ENCODE measurements at regions of chr20 and their contacts with region 1.

Region 1: DNA sequence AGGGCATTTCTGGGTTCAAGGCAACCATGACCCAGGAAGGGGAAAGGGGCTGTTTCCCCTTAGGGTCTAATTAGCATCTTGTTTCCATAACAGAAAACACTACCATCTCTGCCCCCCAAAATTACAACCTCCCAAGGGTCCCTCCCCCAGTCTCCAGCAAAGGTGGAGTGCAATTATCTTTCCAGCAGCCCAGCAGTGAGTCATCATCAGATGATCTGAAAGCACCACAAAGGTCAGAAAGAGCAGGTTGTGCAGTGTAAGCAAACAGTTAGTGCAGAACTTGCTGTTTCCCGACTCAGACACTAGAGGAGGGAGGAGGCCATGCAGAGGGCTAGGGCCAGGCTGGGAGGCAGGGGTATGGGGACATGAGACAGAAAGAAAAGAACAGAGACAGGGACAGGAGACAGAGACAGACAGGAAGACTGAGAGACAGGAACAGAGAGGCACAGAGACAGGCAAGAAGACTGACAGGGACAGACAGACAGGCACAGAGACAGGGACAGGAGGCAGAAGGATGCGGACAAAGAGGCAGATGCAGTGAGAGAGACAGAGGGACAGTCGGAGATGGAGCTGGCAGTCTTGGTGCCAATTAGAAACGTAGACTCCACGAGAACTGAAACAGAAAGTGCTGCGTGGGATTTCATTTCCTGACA is 62.5 kb downstream of the PYGB start:
- DNase-seq: peak; percentile 70
- H3K4me3 ChIP-seq: peak overlapping the region; percentile 31
- H3K27me3 ChIP-seq: no peaks in the 10 kb centered on the region
- CTCF ChIP-seq: peak; percentile 88

Region 2: DNA sequence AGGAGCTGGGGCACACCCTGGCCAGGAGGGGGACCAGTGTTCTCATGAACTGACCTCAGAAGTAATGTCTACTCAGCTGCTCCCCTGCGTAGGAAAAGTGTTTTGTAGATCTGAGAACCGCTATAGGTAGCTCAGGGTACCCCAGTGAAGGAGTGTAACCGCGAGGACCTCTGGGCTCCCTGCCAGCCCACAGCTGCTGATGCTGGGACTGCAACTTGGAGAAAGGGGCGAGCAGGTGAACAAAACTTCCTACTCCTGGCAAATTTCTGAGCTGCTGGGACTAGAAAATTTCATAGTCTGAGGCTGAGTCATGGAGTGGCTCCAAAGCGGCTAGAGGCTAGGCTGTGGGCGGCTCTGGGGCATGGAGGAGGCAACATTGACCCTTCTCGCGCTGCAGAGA is 10.6 kb before region 1 on chr20:
- CTCF ChIA-PET with region 1: interaction called, 10 read pairs
- POLR2A ChIA-PET with region 1: no interaction called
- DNase-seq: no peak
- H3K4me3 ChIP-seq: no peak overlapping the region
- H3K27me3 ChIP-seq: no peaks in the 10 kb centered on the region
- CTCF ChIP-seq: no peak

Measured in BJ (cell line).